Activated B cell treated with CpG ODN at 0.5 μM for 24 hours (primary cell): ENCODE measurements at regions of chr13 and their contacts with region 1.

Region 1: DNA sequence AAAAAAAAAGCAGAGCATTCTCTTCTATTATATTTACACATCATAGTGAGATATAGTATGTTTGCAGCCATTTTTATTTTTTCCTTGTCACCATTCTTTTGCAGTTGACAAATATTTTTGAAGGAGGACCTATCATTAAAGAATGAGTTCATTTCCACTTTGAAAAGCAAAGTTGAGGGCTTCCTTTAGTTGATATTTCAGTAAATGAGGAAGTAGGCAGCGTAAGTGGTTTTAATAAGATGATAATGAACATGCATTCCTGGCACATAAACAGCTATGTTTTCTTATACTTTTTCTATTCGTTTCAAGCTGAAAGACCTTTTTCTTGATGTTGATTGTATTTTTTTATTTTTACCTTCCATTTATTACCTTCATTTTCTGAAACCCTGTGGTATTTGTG is 66.2 kb downstream of the ZMYM2 start:
- DNase-seq: no peak
- ATAC-seq: no peak
- H3K4me3 Mint-ChIP-seq: no peak overlapping the region
- H3K27ac Mint-ChIP-seq: peak overlapping the region; percentile 24
- H3K4me1 Mint-ChIP-seq: peaks cover 16% of the 10 kb centered on the region
- H3K27me3 Mint-ChIP-seq: no peaks in the 10 kb centered on the region
- CTCF ChIP-seq: no peak

Region 2: GRCh38 chr13:20064128-20064527 is 39.4 kb after region 1 on chr13:
- CTCF ChIA-PET with region 1: no interaction called
- POLR2A ChIA-PET with region 1: no interaction called
- intact Hi-C with region 1: loop called (anchors 5 kb)
- DNase-seq: no peak
- ATAC-seq: no peak
- H3K4me3 Mint-ChIP-seq: no peak overlapping the region
- H3K27ac Mint-ChIP-seq: no peak overlapping the region
- H3K4me1 Mint-ChIP-seq: no peaks in the 10 kb centered on the region
- H3K27me3 Mint-ChIP-seq: no peaks in the 10 kb centered on the region
- CTCF ChIP-seq: no peak